PC-9 (cell line): ENCODE measurements at regions of chr14 and their contacts with region 1.

Region 1: DNA sequence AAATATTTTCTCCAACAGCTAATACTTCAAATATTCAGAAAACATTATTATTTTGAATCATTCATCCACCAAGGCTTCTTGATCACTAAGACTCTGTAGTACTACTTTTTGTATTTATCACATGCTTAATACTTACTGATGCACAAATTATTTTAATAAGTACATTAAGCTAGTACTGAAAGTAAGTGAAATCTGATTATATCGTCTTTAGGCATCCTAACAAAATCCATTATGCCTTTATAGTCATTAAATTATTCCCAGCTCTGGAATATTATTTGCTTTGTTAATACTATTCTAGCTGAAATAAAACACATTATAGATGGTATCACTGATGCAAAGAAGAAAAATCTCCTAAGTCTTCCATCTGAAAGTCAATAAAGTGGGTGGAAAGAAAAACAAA is 75.1 kb upstream of the TTC7B start:
- DNase-seq: no peak
- H3K4me3 ChIP-seq: no peak overlapping the region
- H3K27ac ChIP-seq: no peak overlapping the region
- H3K4me1 ChIP-seq: no peaks in the 10 kb centered on the region
- H3K27me3 ChIP-seq: no peaks in the 10 kb centered on the region
- CTCF ChIP-seq: no peak

Region 2: DNA sequence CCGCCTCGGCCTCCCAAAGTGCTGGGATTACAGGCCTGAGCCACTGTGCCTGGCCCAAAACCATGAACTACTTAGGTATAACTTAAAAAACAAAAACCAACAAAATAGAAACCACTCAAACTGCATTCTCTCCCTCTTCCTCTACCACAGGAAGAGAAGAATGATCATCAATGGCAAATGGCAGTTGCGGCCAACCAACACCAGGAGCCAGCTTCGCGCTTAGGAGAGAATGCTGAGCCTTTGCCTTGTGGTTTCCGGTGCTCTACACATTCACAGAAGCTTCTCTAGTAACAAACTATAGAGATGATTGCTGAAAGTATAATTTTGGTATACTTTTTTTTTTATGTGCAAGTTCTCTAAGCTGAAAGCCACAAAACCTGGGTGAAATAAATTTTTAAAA is 823.5 kb after region 1 on chr14:
- CTCF ChIA-PET with region 1: no interaction called
- POLR2A ChIA-PET with region 1: interaction called, 11 read pairs
- intact Hi-C with region 1: no loop called
- DNase-seq: no peak
- H3K4me3 ChIP-seq: no peak overlapping the region
- H3K27ac ChIP-seq: no peak overlapping the region
- H3K4me1 ChIP-seq: no peaks in the 10 kb centered on the region
- H3K27me3 ChIP-seq: no peaks in the 10 kb centered on the region
- CTCF ChIP-seq: no peak